ENCODE measurements at regions of chr22 and their contacts with region 1.

Region 1: DNA sequence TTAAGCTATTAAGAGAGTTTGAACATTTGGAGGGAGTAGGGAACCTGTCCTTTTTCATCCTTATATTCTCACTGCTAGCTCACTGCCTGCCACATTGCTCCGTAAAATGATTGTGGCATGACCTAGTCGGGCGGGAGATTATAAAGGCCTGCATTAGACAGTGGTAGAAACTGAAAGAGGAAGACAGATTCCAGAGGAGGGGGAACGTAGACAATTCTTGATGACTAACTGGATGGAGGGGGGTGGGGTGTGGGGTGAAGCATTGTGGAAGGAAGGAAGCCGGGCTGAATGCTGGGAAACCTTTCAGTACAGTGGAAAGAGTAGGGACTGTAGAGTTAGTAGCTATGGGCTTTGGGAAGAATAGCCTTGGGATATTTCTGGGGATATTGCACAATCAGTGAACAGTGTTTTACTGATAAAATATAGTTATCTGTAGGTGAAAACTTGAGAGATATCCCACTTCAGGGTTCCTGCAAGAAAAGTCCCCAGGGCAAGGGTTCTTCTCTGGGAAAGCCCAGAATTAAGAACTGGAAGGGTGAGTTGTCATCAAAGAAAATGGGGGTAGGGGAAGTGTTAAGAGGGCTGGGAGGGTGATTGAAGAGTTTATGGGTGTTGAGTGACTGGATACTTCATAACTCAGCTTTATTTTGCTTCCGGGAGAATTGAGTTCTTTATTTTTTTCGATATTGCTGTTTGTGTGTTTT is 2.1 kb downstream of the MED15 start:
- DNase-seq: peak; percentile 71 to 81 (median 78)
- ATAC-seq: peak; percentile 80 to 84
- H3K4me3 ChIP-seq: peak overlapping the region; percentile 26
- H3K27ac ChIP-seq: peak overlapping the region; percentile 95
- H3K4me1 ChIP-seq: peaks cover 16% of the 10 kb centered on the region
- H3K27me3 ChIP-seq: no peaks in the 10 kb centered on the region

Region 2: GRCh38 chr22:20442485-20443284 is 66.8 kb before region 1 on chr22:
- intact Hi-C with region 1: no loop called
- DNase-seq: peak in 2 of 3 donors; percentile 11 to 50
- ATAC-seq: no peak
- H3K4me3 ChIP-seq: no peak overlapping the region
- H3K27ac ChIP-seq: no peak overlapping the region
- H3K4me1 ChIP-seq: no peaks in the 10 kb centered on the region
- H3K27me3 ChIP-seq: no peaks in the 10 kb centered on the region

Region 3: GRCh38 chr22:20568989-20569769 is 59.7 kb after region 1 on chr22:
- intact Hi-C with region 1: loop called in 1 of 4 experiments (anchors 10 kb)
- DNase-seq: peak; percentile 77 to 91 (median 87)
- ATAC-seq: peak; percentile 75 to 81
- H3K4me3 ChIP-seq: no peak overlapping the region
- H3K27ac ChIP-seq: peak overlapping the region; percentile 58
- H3K4me1 ChIP-seq: peaks cover 22% of the 10 kb centered on the region
- H3K27me3 ChIP-seq: no peaks in the 10 kb centered on the region

Region 4: GRCh38 chr22:20803696-20804324 is 294.3 kb after region 1 on chr22:
- intact Hi-C with region 1: no loop called
- DNase-seq: peak in 2 of 3 donors; percentile 30 to 71
- ATAC-seq: peak; percentile 50 to 68
- H3K4me3 ChIP-seq: no peak overlapping the region
- H3K27ac ChIP-seq: no peak overlapping the region
- H3K4me1 ChIP-seq: no peaks in the 10 kb centered on the region
- H3K27me3 ChIP-seq: no peaks in the 10 kb centered on the region

Measured in right cardiac atrium (tissue), 5 donors.